ENCODE measurements at regions of chr11 and their contacts with region 1.

Region 1: GRCh38 chr11:65497141-65498041 is 1.5 kb upstream of the MALAT1 start:
- DNase-seq: peak; percentile 98
- H3K4me3 Mint-ChIP-seq: no peak overlapping the region
- H3K27ac Mint-ChIP-seq: no peak overlapping the region
- H3K4me1 Mint-ChIP-seq: peaks cover 38% of the 10 kb centered on the region
- H3K27me3 Mint-ChIP-seq: no peaks in the 10 kb centered on the region

Region 2: GRCh38 chr11:65329944-65330403 is 167.4 kb before region 1 on chr11:
- CTCF ChIA-PET with region 1: interaction called, 5 read pairs
- POLR2A ChIA-PET with region 1: interaction called, 35 read pairs
- DNase-seq: peak; percentile 82
- H3K4me3 Mint-ChIP-seq: no peak overlapping the region
- H3K27ac Mint-ChIP-seq: no peak overlapping the region
- H3K4me1 Mint-ChIP-seq: peaks cover 14% of the 10 kb centered on the region
- H3K27me3 Mint-ChIP-seq: no peaks in the 10 kb centered on the region

Region 3: GRCh38 chr11:65382033-65382807 is 115.2 kb before region 1 on chr11 and contains the start of gene SLC25A45:
- CTCF ChIA-PET with region 1: interaction called, 12 read pairs
- POLR2A ChIA-PET with region 1: interaction called, 443 read pairs
- DNase-seq: peak; percentile 93
- H3K4me3 Mint-ChIP-seq: peak within 1 kb of the TSS; percentile 81
- H3K27ac Mint-ChIP-seq: peak within 1 kb of the TSS; percentile 99
- H3K4me1 Mint-ChIP-seq: peaks cover 59% of the 10 kb centered on the region
- H3K27me3 Mint-ChIP-seq: no peaks in the 10 kb centered on the region
- total RNA-seq, gene SLC25A45: 19.4 to 19.8 TPM

Region 4: GRCh38 chr11:65440831-65441499 is 56.4 kb before region 1 on chr11:
- CTCF ChIA-PET with region 1: no interaction called
- POLR2A ChIA-PET with region 1: interaction called, 155 read pairs
- DNase-seq: no peak
- H3K4me3 Mint-ChIP-seq: no peak overlapping the region
- H3K27ac Mint-ChIP-seq: peak overlapping the region; percentile 82
- H3K4me1 Mint-ChIP-seq: peaks cover 73% of the 10 kb centered on the region
- H3K27me3 Mint-ChIP-seq: no peaks in the 10 kb centered on the region

Region 5: DNA sequence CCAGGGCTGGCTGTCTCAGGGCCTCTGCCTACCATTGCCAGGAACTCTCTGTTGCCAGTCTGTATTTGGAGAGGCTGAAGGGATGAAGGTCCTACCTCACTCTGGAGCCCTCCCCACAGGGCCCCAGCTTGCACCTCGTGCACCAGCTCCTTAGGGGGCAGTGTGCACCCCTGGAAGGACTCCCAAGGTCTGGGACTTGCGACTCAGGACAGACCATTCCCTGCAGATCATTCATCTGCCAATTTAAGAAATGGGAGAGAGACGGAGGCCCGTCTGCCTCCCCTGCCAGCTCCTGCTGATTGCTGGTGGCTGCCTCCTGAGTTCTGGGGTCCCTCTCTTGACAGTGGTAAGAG is 26.0 kb before region 1 on chr11:
- CTCF ChIA-PET with region 1: interaction called, 50 read pairs
- POLR2A ChIA-PET with region 1: interaction called, 1,583 read pairs
- DNase-seq: no peak
- H3K4me3 Mint-ChIP-seq: no peak overlapping the region
- H3K27ac Mint-ChIP-seq: peak overlapping the region; percentile 96
- H3K4me1 Mint-ChIP-seq: peaks cover 38% of the 10 kb centered on the region
- H3K27me3 Mint-ChIP-seq: no peaks in the 10 kb centered on the region

Region 6: DNA sequence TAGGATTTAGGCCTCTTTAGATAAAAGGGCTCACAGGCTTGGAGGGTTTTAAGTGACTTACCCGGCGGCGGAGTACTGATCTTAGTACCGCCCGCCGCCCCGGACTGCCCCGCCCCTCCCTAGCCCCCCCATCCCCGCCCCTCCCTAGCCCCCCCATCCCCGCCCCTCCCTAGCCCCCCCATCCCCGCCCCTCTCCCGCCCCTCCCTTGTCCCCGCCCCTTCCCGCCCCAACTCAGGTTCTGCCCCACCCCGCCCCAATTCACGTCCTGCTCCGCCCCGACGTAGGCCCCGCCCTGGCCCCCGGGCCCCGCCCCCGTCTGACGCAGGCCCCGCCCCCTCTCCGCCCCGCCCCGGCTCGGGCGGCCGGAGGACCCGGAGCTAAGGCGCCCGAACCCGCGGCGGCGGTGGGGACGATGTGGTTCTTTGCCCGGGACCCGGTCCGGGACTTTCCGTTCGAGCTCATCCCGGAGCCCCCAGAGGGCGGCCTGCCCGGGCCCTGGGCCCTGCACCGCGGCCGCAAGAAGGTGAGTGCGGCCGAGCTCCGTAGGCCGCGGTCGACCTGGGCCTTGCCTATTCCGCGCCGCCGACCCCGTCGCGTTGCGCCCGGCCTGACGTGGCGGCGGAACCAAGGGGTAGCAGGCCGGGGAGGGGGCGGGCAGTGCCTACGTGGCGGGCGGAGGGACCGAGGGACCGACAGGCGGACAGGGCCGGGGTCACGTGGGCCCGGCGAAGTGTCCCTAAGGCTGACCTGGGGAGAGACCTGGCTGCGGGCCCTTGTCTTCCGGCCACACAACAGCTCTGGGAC is 27.6 kb after region 1 on chr11 and contains the start of gene SCYL1:
- CTCF ChIA-PET with region 1: no interaction called
- POLR2A ChIA-PET with region 1: interaction called, 39 read pairs
- DNase-seq: peak; percentile 86
- H3K4me3 Mint-ChIP-seq: peak within 1 kb of the TSS; percentile 80
- H3K27ac Mint-ChIP-seq: peak within 1 kb of the TSS; percentile 83
- H3K4me1 Mint-ChIP-seq: peaks cover 56% of the 10 kb centered on the region
- H3K27me3 Mint-ChIP-seq: no peaks in the 10 kb centered on the region
- total RNA-seq, gene SCYL1: 56.9 to 58.5 TPM

Region 7: DNA sequence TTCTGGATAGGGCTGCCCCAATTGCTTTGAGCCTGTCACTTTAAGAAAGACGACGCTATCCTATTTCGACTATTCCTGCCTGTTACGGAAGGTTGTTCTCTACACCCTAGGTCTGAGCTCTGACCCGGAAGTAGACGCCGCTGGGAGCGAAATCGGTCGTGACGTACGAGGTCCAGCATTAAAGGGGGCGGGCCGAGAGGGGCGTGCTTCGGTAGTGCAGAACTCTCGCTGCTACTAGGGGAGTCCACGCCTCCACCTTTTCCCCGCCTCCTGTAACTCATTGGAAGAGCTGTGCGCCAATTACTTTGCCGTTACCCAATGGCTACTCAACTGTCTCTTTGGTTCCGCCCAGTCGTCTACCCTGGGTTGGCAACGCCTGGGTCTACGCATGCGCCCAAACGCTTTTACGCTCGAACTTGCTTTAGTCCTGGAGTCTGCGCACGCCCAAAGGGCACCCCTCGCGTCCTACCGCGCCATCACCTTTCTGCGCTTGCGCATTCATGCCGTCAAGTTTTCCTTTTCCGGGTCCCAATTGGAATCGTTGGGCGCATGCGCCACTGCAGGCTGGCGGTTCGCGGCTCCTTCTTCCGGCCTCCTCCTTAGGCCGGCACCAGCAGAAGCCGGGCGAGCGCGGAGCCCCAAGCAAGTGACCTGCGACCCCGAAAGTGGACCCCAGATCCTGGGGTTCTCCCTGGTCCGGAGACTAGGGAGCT is 118.0 kb after region 1 on chr11 and contains the start of gene PCNX3:
- CTCF ChIA-PET with region 1: no interaction called
- POLR2A ChIA-PET with region 1: interaction called, 38 read pairs
- DNase-seq: peak; percentile 100
- H3K4me3 Mint-ChIP-seq: peak within 1 kb of the TSS; percentile 98
- H3K27ac Mint-ChIP-seq: peak within 1 kb of the TSS; percentile 95
- H3K4me1 Mint-ChIP-seq: peaks cover 44% of the 10 kb centered on the region
- H3K27me3 Mint-ChIP-seq: no peaks in the 10 kb centered on the region
- total RNA-seq, gene PCNX3: 39.8 to 40.3 TPM

Region 8: DNA sequence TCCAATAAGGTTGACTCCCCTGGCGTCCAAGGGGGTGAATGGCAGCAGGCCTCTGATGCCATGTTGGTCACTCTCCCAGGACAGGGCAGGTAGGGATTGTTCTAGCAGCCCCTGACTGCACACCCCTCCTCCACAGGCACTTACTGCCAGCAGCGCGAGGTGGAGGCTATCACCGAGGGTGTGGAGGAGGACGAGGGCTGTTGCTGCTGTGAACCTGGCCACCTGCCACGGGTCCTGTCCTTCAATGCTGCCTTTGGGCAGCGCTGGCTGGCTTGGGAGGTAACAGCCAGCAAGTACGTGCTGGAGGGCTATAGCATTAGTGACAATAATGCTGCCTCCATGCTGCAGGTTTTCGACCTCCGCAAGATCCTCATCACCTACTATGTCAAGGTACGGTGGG is 132.8 kb after region 1 on chr11:
- CTCF ChIA-PET with region 1: no interaction called
- POLR2A ChIA-PET with region 1: no interaction called
- DNase-seq: no peak
- H3K4me3 Mint-ChIP-seq: no peak overlapping the region
- H3K27ac Mint-ChIP-seq: no peak overlapping the region
- H3K4me1 Mint-ChIP-seq: peaks cover 24% of the 10 kb centered on the region
- H3K27me3 Mint-ChIP-seq: no peaks in the 10 kb centered on the region

Measured in activated CD4-positive, alpha-beta memory T cell treated with anti-CD3 and anti-CD28 coated beads, Interleukin-2, amount 10 ng/mL, durations not matched to agents 7 days and 5 days (primary cell).